ENCODE measurements at regions of chr12 and their contacts with region 1.

Region 1: GRCh38 chr12:10153271-10154144 is 18.4 kb downstream of the OLR1 start:
- DNase-seq: peak; percentile 33
- H3K4me3 Mint-ChIP-seq: peak overlapping the region; percentile 82
- H3K27ac Mint-ChIP-seq: no peak overlapping the region
- H3K4me1 Mint-ChIP-seq: peaks cover 8% of the 10 kb centered on the region
- H3K27me3 Mint-ChIP-seq: peaks cover 39% of the 10 kb centered on the region

Region 2: DNA sequence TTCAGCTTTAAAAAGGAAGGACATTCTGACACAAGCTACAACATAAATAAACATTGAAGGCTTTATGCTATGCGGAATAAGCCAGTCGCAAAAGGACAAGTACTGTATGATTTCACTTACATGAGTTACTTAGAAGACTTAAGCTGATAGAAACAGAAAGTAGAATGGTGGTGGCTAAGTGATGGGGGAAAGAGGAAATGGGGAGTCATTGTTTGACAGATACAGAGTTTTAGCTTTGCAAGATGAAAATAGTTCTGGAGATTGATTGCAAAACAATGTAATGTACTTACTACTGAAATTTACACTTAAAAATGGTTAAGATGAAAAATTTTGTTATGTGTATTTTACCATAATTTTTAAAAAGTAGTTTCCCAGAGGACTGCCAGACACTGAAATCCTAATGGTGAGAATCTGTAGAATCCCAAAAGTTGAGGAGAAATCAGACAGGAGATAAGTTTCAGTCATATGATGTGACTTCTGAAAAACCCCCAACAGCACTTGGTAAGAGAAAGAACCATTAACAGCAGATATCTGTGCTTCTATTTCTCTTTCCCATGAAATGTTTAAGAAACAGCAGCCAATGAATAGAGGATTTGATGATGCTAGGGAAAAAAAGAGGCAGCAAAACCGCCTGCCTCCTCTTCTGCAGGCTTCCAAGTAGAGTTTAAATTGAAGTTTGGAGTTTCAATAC is 204.8 kb before region 1 on chr12:
- intact Hi-C with region 1: loop called (anchors 5 kb)
- DNase-seq: no peak
- H3K4me3 Mint-ChIP-seq: peak overlapping the region; percentile 23
- H3K27ac Mint-ChIP-seq: peak overlapping the region; percentile 53
- H3K4me1 Mint-ChIP-seq: peaks cover 57% of the 10 kb centered on the region
- H3K27me3 Mint-ChIP-seq: no peaks in the 10 kb centered on the region

Region 3: GRCh38 chr12:10102292-10102691 is 51.2 kb before region 1 on chr12:
- intact Hi-C with region 1: no loop called
- DNase-seq: no peak
- H3K4me3 Mint-ChIP-seq: no peak overlapping the region
- H3K27ac Mint-ChIP-seq: no peak overlapping the region
- H3K4me1 Mint-ChIP-seq: no peaks in the 10 kb centered on the region
- H3K27me3 Mint-ChIP-seq: peaks cover 13% of the 10 kb centered on the region

Region 4: DNA sequence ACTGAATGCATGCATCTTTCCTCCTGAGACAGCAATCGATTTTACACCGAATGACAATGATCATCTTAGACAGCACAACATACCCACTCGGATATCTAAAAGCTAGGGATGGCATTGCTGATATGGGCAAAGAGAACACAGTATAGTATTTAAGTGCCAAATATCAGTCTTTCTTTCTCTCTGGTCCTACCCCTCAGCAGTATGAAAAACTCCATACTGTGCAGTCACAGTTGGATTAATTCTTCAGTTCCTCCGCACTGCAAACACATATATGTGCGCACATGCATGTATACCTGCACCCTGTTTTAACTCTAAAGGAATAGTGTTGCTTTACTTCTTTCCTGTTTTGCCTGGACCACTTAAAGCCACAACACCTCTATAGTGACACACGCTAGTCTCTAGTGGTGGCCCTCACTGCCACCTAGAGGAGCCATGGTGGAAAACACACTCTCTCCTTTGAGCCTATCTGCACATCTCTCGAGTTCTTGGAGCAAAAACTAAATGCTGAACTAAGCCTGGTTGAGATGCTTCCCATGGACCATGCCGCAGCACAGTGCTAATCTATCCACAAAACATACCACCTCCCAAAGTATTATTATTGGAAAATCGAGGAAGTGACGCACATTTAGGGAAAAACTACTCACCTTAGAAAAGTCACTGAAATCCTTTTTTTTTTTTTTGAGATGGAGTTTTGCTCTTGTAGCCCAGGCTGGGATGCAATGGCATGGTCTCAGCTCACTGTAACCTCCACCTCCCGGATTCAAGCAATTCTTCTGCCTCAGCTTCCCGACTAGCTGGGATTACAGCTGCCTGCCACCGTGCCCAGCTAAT is 37.3 kb after region 1 on chr12:
- intact Hi-C with region 1: loop called (anchors 2 kb)
- DNase-seq: peak; percentile 18
- H3K4me3 Mint-ChIP-seq: no peak overlapping the region
- H3K27ac Mint-ChIP-seq: no peak overlapping the region
- H3K4me1 Mint-ChIP-seq: peaks cover 2% of the 10 kb centered on the region
- H3K27me3 Mint-ChIP-seq: peaks cover 35% of the 10 kb centered on the region

Region 5: DNA sequence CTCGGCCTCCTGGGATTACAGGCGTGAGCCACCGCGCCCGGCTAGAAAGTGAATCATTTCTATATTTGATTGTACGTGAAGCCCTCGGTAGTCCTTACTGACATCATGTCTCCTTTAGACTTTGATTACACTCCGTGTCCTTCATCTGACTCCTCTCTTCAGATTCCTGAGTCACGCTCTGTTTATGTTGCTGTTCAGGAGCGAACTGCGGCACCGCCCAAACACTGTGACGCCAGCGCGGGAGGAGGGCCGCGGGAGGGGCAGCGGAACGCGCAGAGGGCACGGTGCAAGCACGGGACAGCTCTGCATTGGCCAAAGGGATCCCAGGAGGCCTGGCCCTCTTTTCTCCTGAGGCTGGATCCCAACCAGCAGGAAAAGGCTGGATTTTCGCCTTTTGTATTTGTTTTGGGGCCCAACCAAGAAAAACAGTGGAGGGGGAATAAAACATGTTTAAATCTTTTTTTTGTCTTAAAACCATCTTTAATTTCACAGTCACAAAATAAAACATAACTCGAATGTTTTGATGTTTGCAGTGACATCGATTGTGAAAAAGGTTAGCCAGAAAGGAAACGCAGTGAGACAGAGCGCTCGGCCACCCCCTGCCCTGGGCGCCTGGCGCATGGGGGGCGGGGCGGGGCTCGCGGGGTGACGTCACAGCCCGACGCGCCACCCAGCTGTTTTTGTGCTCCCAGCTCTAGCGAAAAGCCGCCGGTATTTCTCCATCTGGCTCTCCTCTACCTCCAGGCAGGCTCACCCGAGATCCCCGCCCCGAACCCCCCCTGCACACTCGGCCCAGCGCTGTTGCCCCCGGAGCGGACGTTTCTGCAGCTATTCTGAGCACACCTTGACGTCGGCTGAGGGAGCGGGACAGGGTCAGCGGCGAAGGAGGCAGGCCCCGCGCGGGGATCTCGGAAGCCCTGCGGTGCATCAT is 59.0 kb after region 1 on chr12 and contains the start of gene GABARAPL1:
- intact Hi-C with region 1: loop called (anchors 10 kb)
- DNase-seq: peak; percentile 81
- H3K4me3 Mint-ChIP-seq: peak within 1 kb of the TSS; percentile 91
- H3K27ac Mint-ChIP-seq: peak within 1 kb of the TSS; percentile 93
- H3K4me1 Mint-ChIP-seq: peaks cover 30% of the 10 kb centered on the region
- H3K27me3 Mint-ChIP-seq: peaks cover 21% of the 10 kb centered on the region
- total RNA-seq, gene GABARAPL1: 4.0 and 5.2 TPM in 2 replicates

Region 6: DNA sequence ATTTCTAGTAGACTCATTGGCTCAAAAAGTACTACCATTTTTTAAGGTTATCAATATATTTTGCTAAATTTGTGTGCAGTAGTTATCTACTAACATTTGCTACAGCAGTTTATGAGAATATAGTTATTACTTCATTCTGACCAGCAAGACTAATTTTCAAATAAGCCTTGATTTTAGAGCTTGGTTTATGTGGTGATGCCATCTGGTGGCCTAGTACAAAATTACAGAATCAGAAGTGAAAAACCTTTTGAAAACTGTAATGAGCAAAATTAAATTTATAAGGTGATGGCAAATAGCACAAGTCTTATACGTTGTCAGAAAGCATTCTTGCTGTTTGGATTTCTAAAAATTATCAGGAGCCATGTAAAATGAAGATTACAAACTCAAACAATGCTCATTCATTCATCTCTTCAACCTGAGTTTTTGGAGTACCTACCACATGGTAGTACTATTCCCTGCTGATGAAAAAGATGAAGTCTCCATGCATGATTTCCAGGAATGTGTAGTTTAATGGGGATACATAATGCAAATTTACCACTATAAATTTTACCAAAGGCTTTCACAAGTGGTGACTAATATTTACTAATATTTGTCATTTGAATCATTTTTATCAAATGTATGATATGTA is 408.9 kb after region 1 on chr12:
- intact Hi-C with region 1: loop called (anchors 5 kb)
- DNase-seq: no peak
- H3K4me3 Mint-ChIP-seq: no peak overlapping the region
- H3K27ac Mint-ChIP-seq: no peak overlapping the region
- H3K4me1 Mint-ChIP-seq: no peaks in the 10 kb centered on the region
- H3K27me3 Mint-ChIP-seq: peaks cover 39% of the 10 kb centered on the region

Region 7: GRCh38 chr12:11486623-11487444 is 1333.3 kb after region 1 on chr12:
- intact Hi-C with region 1: loop called (anchors 2 kb)
- DNase-seq: peak; percentile 62
- H3K4me3 Mint-ChIP-seq: no peak overlapping the region
- H3K27ac Mint-ChIP-seq: no peak overlapping the region
- H3K4me1 Mint-ChIP-seq: peaks cover 1% of the 10 kb centered on the region
- H3K27me3 Mint-ChIP-seq: peaks cover 8% of the 10 kb centered on the region

Measured in activated T-helper 2 cell treated with anti-CD3 and anti-CD28 coated beads, Interferon-gamma antibody, Interleukin-2, Interleukin-4, amounts not matched to agents 10 μg/mL and 5 μg/mL and 100 μg/mL, durations not matched to agents 14 hours and 24 hours and 36 hours (primary cell).